ENCODE measurements at regions of chr20 and their contacts with region 1.

Region 1: GRCh38 chr20:51525241-51526129 is 17.0 kb downstream of the NFATC2 start:
- DNase-seq: peak; percentile 45
- H3K4me3 ChIP-seq: no peak overlapping the region
- H3K27ac ChIP-seq: no peak overlapping the region
- H3K4me1 ChIP-seq: peaks cover 10% of the 10 kb centered on the region
- H3K27me3 ChIP-seq: no peaks in the 10 kb centered on the region
- CTCF ChIP-seq: no peak
- POLR2A ChIP-seq: no peak

Region 2: DNA sequence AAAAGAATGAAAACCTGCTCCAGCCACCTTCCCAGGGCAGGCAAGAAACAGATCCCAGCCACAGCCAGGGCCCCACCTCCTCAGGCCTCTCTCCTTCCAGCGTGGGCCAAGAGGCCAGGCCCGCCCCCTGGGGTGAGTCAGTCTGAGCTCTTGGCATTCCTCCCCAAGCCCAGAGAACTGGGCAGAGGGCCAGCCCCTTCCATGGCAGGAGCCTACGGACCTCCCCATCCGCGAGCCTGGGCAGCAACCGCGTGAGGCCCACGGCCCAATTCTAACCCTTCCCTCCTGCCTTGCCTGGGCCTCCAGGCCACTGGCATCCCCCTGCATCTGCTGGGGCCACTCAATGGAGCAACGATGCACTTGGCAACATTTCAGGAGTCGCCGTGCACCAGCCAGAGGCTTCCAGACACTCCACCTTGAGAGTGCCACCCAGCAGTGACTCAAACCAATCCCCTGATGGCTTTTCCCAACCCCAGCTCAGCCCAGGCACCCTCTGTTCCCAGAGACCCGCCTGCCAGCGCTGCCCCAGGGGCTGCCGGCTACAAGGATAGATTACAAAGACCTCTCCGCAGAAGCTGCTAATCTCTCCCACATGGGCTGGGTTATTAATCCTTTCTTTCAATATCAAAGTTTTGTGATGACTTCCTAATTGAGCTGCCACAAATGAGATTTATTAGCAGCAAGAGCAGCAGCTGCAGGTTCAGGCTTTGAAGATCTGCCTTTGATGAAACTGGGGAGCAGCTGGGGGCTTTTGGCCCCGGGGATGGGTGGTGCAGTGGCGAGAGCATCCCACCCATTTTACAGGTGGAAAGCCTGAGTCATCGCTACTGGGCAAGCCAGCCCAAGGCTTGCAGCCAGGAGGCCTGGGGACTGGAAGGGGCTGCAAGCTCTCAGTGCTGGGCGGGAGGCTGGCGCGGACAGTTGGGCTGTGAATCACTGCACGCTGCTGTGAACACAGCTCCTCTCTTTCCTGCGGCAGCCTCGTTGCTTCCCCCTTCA is 68.7 kb before region 1 on chr20:
- CTCF ChIA-PET with region 1: no interaction called
- POLR2A ChIA-PET with region 1: no interaction called
- dilution Hi-C with region 1: no loop called
- intact Hi-C with region 1: loop called (anchors 2 kb)
- DNase-seq: peak; percentile 99
- H3K4me3 ChIP-seq: no peak overlapping the region
- H3K27ac ChIP-seq: peak overlapping the region; percentile 71
- H3K4me1 ChIP-seq: peaks cover 15% of the 10 kb centered on the region
- H3K27me3 ChIP-seq: no peaks in the 10 kb centered on the region
- CTCF ChIP-seq: no peak
- POLR2A ChIP-seq: no peak

Region 3: GRCh38 chr20:51547951-51548350 is 22.5 kb after region 1 on chr20:
- CTCF ChIA-PET with region 1: interaction called, 4 read pairs
- POLR2A ChIA-PET with region 1: interaction called, 10 read pairs
- dilution Hi-C with region 1: no loop called
- intact Hi-C with region 1: no loop called
- DNase-seq: no peak
- H3K4me3 ChIP-seq: no peak overlapping the region
- H3K27ac ChIP-seq: no peak overlapping the region
- H3K4me1 ChIP-seq: peaks cover 3% of the 10 kb centered on the region
- H3K27me3 ChIP-seq: peaks cover 0 to 5% of the 10 kb centered on the region in 2 experiments
- CTCF ChIP-seq: no peak
- POLR2A ChIP-seq: no peak